ENCODE measurements at regions of chr11 and their contacts with region 1.

Region 1: DNA sequence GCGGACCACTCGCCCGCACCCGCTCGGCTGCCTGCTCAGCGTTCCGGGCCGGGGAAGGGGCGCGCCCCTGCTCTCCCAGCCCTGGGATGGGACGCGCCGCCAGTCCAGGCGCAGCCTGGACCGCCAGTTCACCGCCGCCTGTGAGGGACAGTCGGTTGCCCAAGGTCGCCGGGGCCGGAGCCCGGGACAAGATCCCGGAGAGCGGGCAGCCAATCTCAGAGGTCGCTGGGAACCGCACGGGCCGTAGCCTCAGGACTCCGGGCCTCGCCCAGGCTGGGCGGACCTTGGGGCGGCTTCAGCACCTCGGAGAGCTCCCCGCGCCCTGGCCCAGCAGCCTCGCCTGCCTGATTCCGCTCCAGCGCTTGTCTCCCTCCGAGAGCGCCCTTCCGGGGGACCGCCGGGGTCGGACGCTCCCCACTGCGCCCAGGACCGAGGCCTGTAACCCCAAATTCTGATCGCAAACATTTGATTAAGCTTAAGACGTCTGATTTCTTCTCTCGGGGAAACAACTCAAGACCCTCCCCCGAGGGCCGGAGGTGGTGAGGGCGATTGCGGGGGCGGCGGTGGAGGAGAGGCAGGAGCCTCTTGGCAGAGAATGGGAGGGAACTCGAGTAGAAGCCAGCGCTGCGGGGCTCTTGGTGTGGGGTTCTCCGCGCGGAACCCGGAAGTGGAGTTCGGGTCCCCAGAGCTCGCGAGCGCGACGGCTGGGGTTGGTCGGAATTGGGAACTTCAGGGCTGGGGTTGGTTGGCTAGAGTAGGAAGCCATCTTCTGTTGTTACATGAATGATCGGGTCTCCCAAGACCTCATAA is 1.1 kb upstream of the CHRM4 start:
- DNase-seq: peak; percentile 89 to 95
- H3K4me3 ChIP-seq: peak overlapping the region; percentile 55
- H3K4me3 Mint-ChIP-seq: peak overlapping the region; percentile 75
- H3K27ac Mint-ChIP-seq: peak overlapping the region; percentile 50
- H3K4me1 ChIP-seq: peaks cover 11% of the 10 kb centered on the region
- H3K4me1 Mint-ChIP-seq: peaks cover 19% of the 10 kb centered on the region
- H3K27me3 ChIP-seq: peaks cover 6% of the 10 kb centered on the region
- H3K27me3 Mint-ChIP-seq: peaks cover 8% of the 10 kb centered on the region
- CTCF ChIP-seq: no peak

Region 2: DNA sequence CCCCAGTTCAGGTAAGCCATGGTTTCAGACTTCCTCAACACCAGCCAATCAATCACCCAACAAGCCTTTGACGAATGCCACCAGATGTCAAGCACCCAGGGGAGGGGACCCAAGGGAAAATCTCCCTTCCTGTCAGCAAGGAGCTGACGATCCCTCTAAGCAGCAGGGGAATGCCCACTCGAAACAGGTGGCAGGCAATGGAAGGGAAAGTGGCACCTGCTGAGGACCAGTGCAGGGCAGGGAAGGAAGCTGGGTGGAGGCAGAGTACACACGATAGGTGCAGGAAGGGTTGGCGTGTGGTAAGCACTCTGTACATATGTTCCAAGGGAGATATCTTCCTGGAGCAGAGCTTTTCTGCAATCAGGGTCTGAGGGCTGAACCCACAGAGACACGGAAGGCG is 126.9 kb before region 1 on chr11:
- CTCF ChIA-PET with region 1: no interaction called
- POLR2A ChIA-PET with region 1: no interaction called
- intact Hi-C with region 1: no loop called
- DNase-seq: no peak
- H3K4me3 ChIP-seq: no peak overlapping the region
- H3K4me3 Mint-ChIP-seq: no peak overlapping the region
- H3K27ac Mint-ChIP-seq: no peak overlapping the region
- H3K4me1 ChIP-seq: peaks cover 12% of the 10 kb centered on the region
- H3K4me1 Mint-ChIP-seq: peaks cover 10% of the 10 kb centered on the region
- H3K27me3 ChIP-seq: no peaks in the 10 kb centered on the region
- H3K27me3 Mint-ChIP-seq: no peaks in the 10 kb centered on the region
- CTCF ChIP-seq: no peak

Region 3: DNA sequence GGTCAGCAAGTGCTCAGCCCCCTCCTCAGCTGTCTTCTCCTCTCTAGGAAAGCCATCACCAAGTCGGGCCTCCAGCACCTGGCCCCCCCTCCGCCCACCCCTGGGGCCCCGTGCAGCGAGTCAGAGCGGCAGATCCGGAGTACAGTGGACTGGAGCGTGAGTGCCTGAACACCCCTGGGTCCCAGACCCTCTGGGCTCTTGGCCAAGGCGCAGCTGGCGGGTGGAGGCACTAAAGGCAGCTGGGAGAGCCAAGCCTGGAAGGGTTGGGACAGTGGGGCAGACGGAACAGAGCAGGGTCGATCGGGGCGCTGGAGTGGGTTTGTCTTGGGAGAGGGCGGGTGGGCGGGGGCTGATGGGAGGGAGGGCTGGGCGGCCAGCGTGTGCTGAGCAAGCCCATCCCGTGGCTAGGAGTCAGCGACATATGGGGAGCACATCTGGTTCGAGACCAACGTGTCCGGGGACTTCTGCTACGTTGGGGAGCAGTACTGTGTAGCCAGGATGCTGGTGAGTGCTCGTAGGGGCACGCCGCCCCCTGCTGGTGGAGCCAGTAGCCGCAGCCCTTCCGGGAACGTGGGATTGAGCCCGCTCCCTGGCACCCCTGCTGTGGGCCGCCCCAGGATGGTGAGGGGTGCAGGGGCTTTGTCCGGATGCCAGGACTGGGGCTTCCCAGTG is 25.2 kb before region 1 on chr11:
- CTCF ChIA-PET with region 1: interaction called, 8 read pairs
- POLR2A ChIA-PET with region 1: no interaction called
- intact Hi-C with region 1: loop called (anchors 1 kb)
- DNase-seq: peak in 1 of 2 experiments; percentile 74
- H3K4me3 ChIP-seq: no peak overlapping the region
- H3K4me3 Mint-ChIP-seq: no peak overlapping the region
- H3K27ac Mint-ChIP-seq: no peak overlapping the region
- H3K4me1 ChIP-seq: peaks cover 6% of the 10 kb centered on the region; the same call in 1 of the 2 replicates
- H3K4me1 Mint-ChIP-seq: no peaks in the 10 kb centered on the region
- H3K27me3 ChIP-seq: no peaks in the 10 kb centered on the region
- H3K27me3 Mint-ChIP-seq: no peaks in the 10 kb centered on the region
- CTCF ChIP-seq: peak; percentile 80 to 84

Region 4: DNA sequence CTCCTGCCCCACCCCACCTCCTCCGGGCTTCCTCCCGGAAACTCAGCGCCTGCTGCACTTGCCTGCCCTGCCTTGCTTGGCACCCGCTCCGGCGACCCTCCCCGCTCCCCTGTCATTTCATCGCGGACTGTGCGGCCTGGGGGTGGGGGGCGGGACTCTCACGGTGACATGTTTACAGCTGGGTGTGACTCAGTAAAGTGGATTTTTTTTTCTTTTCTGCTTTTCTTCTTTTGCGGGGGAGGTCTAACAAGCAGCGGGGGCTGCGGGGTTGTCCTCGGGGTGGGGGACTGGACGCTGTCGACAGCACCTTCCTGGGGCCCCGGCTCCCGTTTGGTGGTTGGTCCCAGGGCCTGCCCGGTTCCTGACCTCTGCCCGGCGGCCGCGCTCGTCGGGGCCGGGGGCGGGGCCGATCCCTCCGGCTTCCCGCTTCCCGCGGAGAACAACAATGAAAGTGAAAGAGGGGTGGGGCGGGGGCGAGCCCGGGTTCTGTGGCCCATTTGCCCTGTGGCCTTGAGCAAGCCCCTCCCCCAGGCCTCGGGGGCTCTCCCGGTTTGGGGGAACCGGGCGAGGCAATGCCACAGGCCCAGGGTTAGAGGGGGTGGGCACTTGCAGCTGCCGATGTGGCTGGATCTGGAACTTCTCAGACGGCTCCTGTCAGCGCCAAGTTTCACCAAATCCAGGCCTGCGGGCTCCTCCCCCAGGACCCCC is 12.1 kb before region 1 on chr11:
- CTCF ChIA-PET with region 1: interaction called, 17 read pairs
- POLR2A ChIA-PET with region 1: no interaction called
- intact Hi-C with region 1: loop called (anchors 1 kb)
- DNase-seq: peak; percentile 84 to 85
- H3K4me3 ChIP-seq: peak overlapping the region; percentile 60
- H3K4me3 Mint-ChIP-seq: peak overlapping the region; percentile 95
- H3K27ac Mint-ChIP-seq: peak overlapping the region; percentile 76
- H3K4me1 ChIP-seq: peaks cover 14% of the 10 kb centered on the region
- H3K4me1 Mint-ChIP-seq: no peaks in the 10 kb centered on the region
- H3K27me3 ChIP-seq: no peaks in the 10 kb centered on the region
- H3K27me3 Mint-ChIP-seq: no peaks in the 10 kb centered on the region
- CTCF ChIP-seq: no peak

Region 5: GRCh38 chr11:46529095-46529905 is 136.7 kb after region 1 on chr11:
- CTCF ChIA-PET with region 1: interaction called, 4 read pairs
- POLR2A ChIA-PET with region 1: no interaction called
- intact Hi-C with region 1: loop called (anchors 2 kb)
- DNase-seq: peak; percentile 71 to 81
- H3K4me3 ChIP-seq: no peak overlapping the region
- H3K4me3 Mint-ChIP-seq: no peak overlapping the region
- H3K27ac Mint-ChIP-seq: no peak overlapping the region
- H3K4me1 ChIP-seq: no peaks in the 10 kb centered on the region
- H3K4me1 Mint-ChIP-seq: peaks cover 8% of the 10 kb centered on the region
- H3K27me3 ChIP-seq: no peaks in the 10 kb centered on the region
- H3K27me3 Mint-ChIP-seq: no peaks in the 10 kb centered on the region
- CTCF ChIP-seq: peak; percentile 91 to 94

Region 6: GRCh38 chr11:46537537-46538295 is 145.1 kb after region 1 on chr11:
- CTCF ChIA-PET with region 1: no interaction called
- POLR2A ChIA-PET with region 1: interaction called, 3 read pairs
- intact Hi-C with region 1: loop called (anchors 1 kb)
- DNase-seq: peak; percentile 79 to 80
- H3K4me3 ChIP-seq: no peak overlapping the region
- H3K4me3 Mint-ChIP-seq: no peak overlapping the region
- H3K27ac Mint-ChIP-seq: peak overlapping the region; percentile 23
- H3K4me1 ChIP-seq: peaks cover 10% of the 10 kb centered on the region; the same call in 1 of the 2 replicates
- H3K4me1 Mint-ChIP-seq: peaks cover 22% of the 10 kb centered on the region
- H3K27me3 ChIP-seq: no peaks in the 10 kb centered on the region
- H3K27me3 Mint-ChIP-seq: no peaks in the 10 kb centered on the region
- CTCF ChIP-seq: peak; percentile 90 to 94

Region 7: GRCh38 chr11:46616998-46617675 is 224.5 kb after region 1 on chr11 and contains the starts of genes ATG13 and HARBI1:
- CTCF ChIA-PET with region 1: no interaction called
- POLR2A ChIA-PET with region 1: no interaction called
- intact Hi-C with region 1: loop called (anchors 2 kb)
- DNase-seq: peak; percentile 92 to 96
- H3K4me3 ChIP-seq: peak within 1 kb of the TSS; percentile 96
- H3K4me3 Mint-ChIP-seq: peak within 1 kb of the TSS; percentile 90
- H3K27ac Mint-ChIP-seq: peak within 1 kb of the TSS; percentile 97
- H3K4me1 ChIP-seq: peaks cover 11% of the 10 kb centered on the region
- H3K4me1 Mint-ChIP-seq: peaks cover 18% of the 10 kb centered on the region
- H3K27me3 ChIP-seq: no peaks in the 10 kb centered on the region
- H3K27me3 Mint-ChIP-seq: no peaks in the 10 kb centered on the region
- CTCF ChIP-seq: no peak
- total RNA-seq, gene ATG13: 75.9 and 101 TPM in 2 replicates
- total RNA-seq, gene HARBI1: 7.6 and 9.1 TPM in 2 replicates

Region 8: DNA sequence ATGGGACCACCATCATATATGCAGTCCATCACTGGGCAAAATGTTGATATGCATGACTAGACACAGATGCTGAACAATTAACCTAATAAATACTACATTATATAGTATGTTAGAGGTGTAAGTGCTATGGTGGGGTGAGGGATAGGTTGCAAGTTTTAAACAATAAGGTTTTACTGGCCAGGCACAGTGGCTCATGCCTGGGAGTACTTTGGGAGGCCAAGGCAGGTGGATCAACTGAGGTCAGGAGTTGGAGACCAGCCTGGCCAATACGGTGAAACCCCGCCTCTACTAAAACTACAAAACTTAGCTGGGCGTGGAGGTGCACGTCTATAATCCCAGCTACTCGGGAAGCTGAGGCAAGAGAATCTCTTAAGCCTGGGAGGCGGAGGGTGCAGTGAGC is 354.5 kb after region 1 on chr11:
- CTCF ChIA-PET with region 1: no interaction called
- POLR2A ChIA-PET with region 1: no interaction called
- intact Hi-C with region 1: no loop called
- DNase-seq: no peak
- H3K4me3 ChIP-seq: no peak overlapping the region
- H3K4me3 Mint-ChIP-seq: no peak overlapping the region
- H3K27ac Mint-ChIP-seq: no peak overlapping the region
- H3K4me1 ChIP-seq: peaks cover 14% of the 10 kb centered on the region
- H3K4me1 Mint-ChIP-seq: peaks cover 6% of the 10 kb centered on the region
- H3K27me3 ChIP-seq: no peaks in the 10 kb centered on the region
- H3K27me3 Mint-ChIP-seq: no peaks in the 10 kb centered on the region
- CTCF ChIP-seq: no peak

Measured in Caco-2 (cell line).